Aorta (tissue), 5 donors: ENCODE measurements at regions of chr14 and their contacts with region 1.

Region 1: GRCh38 chr14:31084385-31084784 is 58.2 kb upstream of the STRN3 start:
- DNase-seq: no peak
- ATAC-seq: no peak
- H3K4me3 ChIP-seq: no peak overlapping the region
- H3K27ac ChIP-seq: no peak overlapping the region
- H3K4me1 ChIP-seq: no peaks in the 10 kb centered on the region
- H3K27me3 ChIP-seq: no peaks in the 10 kb centered on the region

Region 2: DNA sequence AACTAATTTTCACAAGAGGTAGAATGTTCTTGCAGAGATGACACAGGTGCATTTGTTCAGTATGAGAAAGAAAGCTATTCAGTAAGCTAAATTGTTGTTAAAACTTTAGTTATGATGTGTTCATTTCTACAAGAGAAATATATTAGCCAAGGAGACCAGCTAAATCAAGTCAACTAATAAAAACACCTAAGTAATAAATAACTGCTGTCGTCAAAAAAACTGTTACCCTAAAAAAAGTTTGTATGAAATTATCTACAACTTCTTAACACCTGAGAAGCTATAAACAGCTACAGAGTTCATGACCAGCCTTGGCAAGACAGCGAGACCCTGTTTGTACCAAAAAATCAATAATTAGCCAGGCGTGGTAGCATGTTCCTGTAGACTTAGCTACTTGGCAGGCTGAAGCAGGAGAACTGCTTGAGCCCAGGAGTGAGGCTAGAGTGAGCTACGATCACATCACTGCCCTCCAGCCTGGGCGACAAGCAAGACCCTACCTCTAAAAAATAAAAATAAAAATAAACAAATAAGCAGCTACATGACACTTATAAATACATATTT is 126.5 kb before region 1 on chr14:
- intact Hi-C with region 1: no loop called
- DNase-seq: no peak
- ATAC-seq: no peak
- H3K4me3 ChIP-seq: no peak overlapping the region
- H3K27ac ChIP-seq: no peak overlapping the region
- H3K4me1 ChIP-seq: no peaks in the 10 kb centered on the region
- H3K27me3 ChIP-seq: no peaks in the 10 kb centered on the region

Region 3: DNA sequence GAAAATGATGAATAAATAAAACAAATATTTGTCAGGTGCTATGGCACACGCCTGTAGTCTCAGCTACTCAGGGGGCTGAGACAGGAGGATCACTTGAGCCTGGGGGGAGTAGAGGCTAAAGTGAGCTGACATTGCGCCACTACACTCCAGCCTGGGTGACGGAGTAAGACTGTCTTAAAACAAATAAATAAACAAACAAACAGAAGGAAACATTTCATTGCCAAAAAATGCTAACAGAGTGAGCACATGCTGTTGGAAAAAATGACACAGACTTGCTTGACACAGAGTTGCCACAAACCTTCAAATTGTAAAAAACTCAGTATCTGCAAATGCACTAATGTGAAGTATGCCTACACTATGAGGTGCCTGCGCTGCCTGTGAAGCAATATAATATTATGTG is 109.8 kb before region 1 on chr14:
- intact Hi-C with region 1: loop called in 1 of 2 experiments (anchors 5 kb)
- DNase-seq: no peak
- ATAC-seq: no peak
- H3K4me3 ChIP-seq: no peak overlapping the region
- H3K27ac ChIP-seq: no peak overlapping the region
- H3K4me1 ChIP-seq: peaks cover 2 to 8% of the 10 kb centered on the region in 2 donors
- H3K27me3 ChIP-seq: no peaks in the 10 kb centered on the region

Region 4: DNA sequence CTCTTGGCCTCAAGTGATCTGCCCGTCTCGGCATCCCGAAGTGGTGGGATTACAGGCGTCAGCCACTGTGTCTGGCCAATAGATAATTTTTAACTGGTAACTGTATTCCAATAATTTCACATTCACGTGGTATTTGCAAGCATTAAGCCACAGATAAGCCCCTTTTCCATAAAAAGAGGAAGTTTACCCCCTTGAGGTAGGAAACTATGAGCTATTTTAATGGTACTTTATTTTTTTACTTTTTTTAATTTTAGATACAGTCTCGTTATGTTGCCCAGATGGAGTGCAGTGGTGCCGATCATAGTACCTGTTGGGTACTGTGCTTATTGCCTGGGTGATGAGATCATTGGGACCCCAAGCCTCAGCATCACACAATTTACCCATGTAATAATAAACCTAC is 101.9 kb before region 1 on chr14:
- intact Hi-C with region 1: loop called (anchors 5 kb)
- DNase-seq: no peak
- ATAC-seq: no peak
- H3K4me3 ChIP-seq: no peak overlapping the region
- H3K27ac ChIP-seq: no peak overlapping the region
- H3K4me1 ChIP-seq: no peaks in the 10 kb centered on the region
- H3K27me3 ChIP-seq: no peaks in the 10 kb centered on the region